ENCODE measurements at regions of chr4 and their contacts with region 1.

Region 1: DNA sequence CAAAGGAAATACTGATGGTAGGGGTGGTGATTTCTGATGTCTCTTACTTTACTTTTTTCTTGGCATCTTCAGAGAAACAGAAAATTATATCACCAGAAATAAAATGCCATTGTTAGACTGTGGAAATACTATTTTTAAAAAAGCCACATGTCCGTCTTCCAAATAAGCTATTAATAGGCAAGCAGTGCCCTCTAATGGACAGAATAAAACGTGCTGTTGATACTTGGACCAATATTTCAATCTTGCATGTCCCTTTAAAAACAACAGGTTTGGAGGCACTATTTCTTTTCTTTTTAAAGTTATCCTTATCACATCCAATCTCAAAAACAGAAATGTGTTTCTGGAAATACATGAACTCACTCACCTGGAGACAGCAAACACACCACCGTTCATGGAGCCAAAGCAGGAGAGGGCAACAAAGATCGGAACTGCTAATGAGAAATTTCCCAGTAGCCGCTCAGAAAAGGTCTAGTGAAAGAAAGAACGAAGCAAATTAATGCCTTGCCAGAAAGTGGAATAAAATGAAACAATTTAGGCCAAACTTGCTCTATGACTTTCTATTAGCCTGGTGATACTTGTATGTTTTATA is 59.2 kb downstream of the SLC7A11 start:
- DNase-seq: no peak
- ATAC-seq: peak; percentile 73 to 86 (median 79)
- H3K4me3 ChIP-seq: no peak overlapping the region
- H3K27ac ChIP-seq: no peak overlapping the region
- H3K4me1 ChIP-seq: peaks cover 0 to 4% (median 0%) of the 10 kb centered on the region in 4 donors
- H3K27me3 ChIP-seq: no peaks in the 10 kb centered on the region
- CTCF ChIP-seq: peak; percentile 69 to 75 (median 72)
- POLR2A ChIP-seq: no peak

Region 2: GRCh38 chr4:138035781-138036258 is 147.1 kb before region 1 on chr4:
- intact Hi-C with region 1: loop called in 1 of 2 experiments (anchors 10 kb)
- DNase-seq: no peak
- ATAC-seq: peak; percentile 83 to 93 (median 86)
- H3K4me3 ChIP-seq: no peak overlapping the region
- H3K27ac ChIP-seq: no peak overlapping the region
- H3K4me1 ChIP-seq: peaks cover 0 to 1% (median 0%) of the 10 kb centered on the region in 4 donors
- H3K27me3 ChIP-seq: no peaks in the 10 kb centered on the region
- CTCF ChIP-seq: peak; percentile 47 to 61 (median 58)
- POLR2A ChIP-seq: no peak